Prostate gland (tissue), 2 donors: ENCODE measurements at regions of chr6 and their contacts with region 1.

Region 1: GRCh38 chr6:14066782-14067406 is 50.7 kb upstream of the CD83 start:
- DNase-seq: peak; percentile 46
- H3K4me3 ChIP-seq: no peak overlapping the region
- H3K27ac ChIP-seq: no peak overlapping the region
- H3K4me1 ChIP-seq: no peaks in the 10 kb centered on the region
- H3K27me3 ChIP-seq: no peaks in the 10 kb centered on the region
- CTCF ChIP-seq: peak; percentile 11 to 84 (median 70)
- POLR2A ChIP-seq: no peak

Region 2: DNA sequence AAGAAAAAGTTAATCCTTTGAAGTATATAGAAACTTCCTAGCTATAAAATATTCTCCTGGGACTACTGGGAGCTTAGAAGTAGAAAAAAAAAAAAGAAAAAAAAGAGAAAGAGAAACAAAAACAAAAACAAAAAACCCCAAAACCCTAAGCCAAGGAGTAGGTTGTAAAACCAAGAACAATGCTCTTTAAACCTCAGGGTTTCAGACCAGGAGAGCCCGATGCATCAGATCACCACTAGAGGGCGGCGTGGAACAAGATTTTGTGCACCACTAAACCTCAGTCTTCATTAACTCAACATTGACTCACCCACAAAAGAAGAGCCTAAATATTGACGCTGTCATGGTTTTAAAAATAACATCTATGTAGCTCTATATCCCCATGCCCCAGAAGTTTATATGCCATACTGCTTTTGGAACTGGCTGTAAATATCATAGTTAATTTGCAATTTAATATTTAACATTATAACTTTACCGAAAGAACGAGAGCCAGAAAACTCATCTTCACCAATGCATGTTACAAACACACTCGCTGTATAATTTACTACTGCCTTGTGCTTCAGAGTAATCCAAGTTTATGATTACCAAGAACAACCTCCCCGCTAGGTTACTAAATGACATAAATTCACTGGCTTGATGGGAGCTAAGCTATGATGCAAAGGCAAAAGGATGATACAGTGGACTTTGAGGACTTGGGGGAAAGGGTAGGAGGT is 271.7 kb before region 1 on chr6:
- intact Hi-C with region 1: loop called (anchors 10 kb)
- DNase-seq: peak; percentile 85
- H3K4me3 ChIP-seq: no peak overlapping the region
- H3K27ac ChIP-seq: peak overlapping the region in 1 of 2 donors; percentile 79
- H3K4me1 ChIP-seq: peaks cover 4% of the 10 kb centered on the region
- H3K27me3 ChIP-seq: no peaks in the 10 kb centered on the region
- CTCF ChIP-seq: peak; percentile 67 to 91 (median 87)
- POLR2A ChIP-seq: no peak

Region 3: DNA sequence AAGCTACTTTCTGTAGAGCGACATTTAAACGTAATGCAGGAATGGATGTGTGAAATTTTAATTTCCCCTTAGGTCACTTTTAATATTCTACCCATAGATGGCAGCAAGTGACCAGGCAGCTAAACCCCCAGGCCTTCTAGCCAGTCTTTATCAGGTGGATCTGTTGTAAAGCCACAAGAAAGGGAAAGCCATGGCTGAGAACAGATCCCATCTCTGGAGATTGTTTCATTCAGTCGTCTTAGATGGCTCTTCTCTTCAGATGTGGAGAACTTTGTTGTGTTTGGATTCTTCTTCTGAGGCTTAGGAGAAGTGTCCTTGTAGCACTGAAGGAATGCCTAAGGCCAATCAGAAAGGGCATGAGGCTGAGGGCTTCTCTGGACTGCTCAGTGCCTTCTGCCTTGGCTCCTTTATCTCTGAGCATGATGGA is 157.9 kb before region 1 on chr6:
- intact Hi-C with region 1: loop called (anchors 5 kb)
- DNase-seq: peak; percentile 45
- H3K4me3 ChIP-seq: no peak overlapping the region
- H3K27ac ChIP-seq: no peak overlapping the region
- H3K4me1 ChIP-seq: no peaks in the 10 kb centered on the region
- H3K27me3 ChIP-seq: no peaks in the 10 kb centered on the region
- CTCF ChIP-seq: peak; percentile 26 to 82 (median 78)
- POLR2A ChIP-seq: no peak